Ovary (tissue), 10 donors: ENCODE measurements at regions of chr5 and their contacts with region 1.

Region 1: DNA sequence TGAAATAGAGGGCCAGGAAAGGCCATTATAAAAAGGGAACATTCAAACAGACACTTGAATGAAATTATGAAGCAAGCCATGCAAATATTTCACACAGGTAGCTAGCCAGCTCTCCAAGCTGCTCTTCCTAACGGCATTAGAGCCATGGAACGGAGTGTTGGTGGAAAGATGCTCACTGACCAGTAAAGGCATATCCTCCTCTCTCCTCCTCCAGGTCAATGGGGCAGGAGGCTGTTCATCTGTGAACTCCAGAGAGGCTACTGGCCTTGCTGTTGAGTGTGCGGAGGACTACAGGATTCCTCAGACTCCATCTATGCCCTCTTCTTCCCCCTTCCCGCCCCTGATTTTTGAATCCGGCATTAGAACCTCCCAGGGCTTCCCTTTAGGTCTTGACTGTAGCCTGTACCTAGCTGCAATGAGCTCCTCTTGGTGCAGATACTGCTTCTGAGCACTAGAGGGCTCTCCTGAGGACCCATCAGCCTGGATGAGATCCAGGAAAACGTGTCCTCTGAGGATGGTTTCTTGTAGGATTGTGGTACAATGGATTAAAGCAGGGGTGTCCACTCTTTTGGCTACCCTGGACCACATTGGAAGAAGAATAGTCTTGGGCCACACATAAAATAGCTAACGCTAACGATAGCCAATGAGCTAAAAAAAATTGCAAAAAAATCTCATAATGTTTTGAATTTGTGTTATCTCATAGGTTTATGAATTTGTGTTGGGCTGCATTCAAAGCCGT is 162.2 kb downstream of the SREK1 start:
- DNase-seq: peak; percentile 37 to 61 (median 46)
- H3K4me3 ChIP-seq: no peak overlapping the region
- H3K27ac ChIP-seq: no peak overlapping the region
- H3K4me1 ChIP-seq: no peaks in the 10 kb centered on the region
- H3K27me3 ChIP-seq: no peaks in the 10 kb centered on the region
- CTCF ChIP-seq: peak; percentile 34 to 54 (median 45)
- EP300 ChIP-seq: no peak
- POLR2A ChIP-seq: no peak

Region 2: GRCh38 chr5:66742083-66742895 is 436.0 kb after region 1 on chr5:
- intact Hi-C with region 1: loop called in 1 of 4 experiments (anchors 10 kb)
- DNase-seq: peak; percentile 29 to 61 (median 45)
- H3K4me3 ChIP-seq: no peak overlapping the region
- H3K27ac ChIP-seq: no peak overlapping the region
- H3K4me1 ChIP-seq: peaks cover 10% of the 10 kb centered on the region
- H3K27me3 ChIP-seq: no peaks in the 10 kb centered on the region
- CTCF ChIP-seq: peak in 1 of 3 donors; percentile 30
- EP300 ChIP-seq: no peak
- POLR2A ChIP-seq: no peak

Region 3: DNA sequence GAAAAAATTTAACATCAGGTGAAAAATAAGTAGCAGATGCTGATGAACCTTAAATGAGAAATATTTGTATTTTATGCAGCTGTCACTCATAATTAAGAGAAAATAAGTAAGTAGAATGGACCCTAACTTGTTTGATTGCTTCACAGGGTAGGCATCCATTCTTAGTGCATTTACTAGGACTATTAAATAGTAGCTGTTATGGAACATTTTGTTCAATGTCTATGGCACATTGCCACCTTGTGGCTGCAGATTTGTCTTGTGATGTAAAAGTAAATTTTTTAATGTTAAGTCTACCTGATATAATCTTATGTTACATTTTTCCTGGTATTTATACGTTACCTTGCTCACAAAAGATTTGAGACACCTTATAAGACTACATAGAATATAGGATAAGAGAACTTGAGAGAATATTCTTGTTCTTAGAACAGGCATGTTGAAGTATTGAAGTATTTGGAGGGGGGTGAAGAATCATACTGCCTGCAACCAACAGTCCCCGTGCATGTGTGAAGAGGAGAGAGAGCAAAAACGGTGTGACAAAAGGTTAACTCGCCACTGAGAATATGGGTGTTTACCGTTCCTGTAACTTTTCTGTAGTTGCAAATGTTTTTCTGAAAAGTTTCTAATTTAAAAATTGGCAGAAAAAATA is 451.0 kb after region 1 on chr5:
- intact Hi-C with region 1: loop called in 3 of 4 experiments (anchors 2 to 5 kb)
- DNase-seq: peak in 4 of 5 donors; percentile 46 to 78 (median 65)
- H3K4me3 ChIP-seq: no peak overlapping the region
- H3K27ac ChIP-seq: no peak overlapping the region
- H3K4me1 ChIP-seq: peaks cover 2% of the 10 kb centered on the region
- H3K27me3 ChIP-seq: no peaks in the 10 kb centered on the region
- CTCF ChIP-seq: peak in 2 of 3 donors; percentile 65 to 69
- EP300 ChIP-seq: no peak
- POLR2A ChIP-seq: no peak